ENCODE measurements at regions of chr10 and their contacts with region 1.

Region 1: GRCh38 chr10:88932539-88933256 is 19.9 kb downstream of the ACTA2 start:
- DNase-seq: peak in 3 of 5 donors; percentile 34 to 53 (median 35)
- H3K4me3 ChIP-seq: no peak overlapping the region
- H3K4me3 Mint-ChIP-seq: no peak overlapping the region
- H3K27ac ChIP-seq: no peak overlapping the region
- H3K27ac Mint-ChIP-seq: peak overlapping the region in 4 of 8 donors; percentile 7 to 93 (median 30)
- H3K4me1 ChIP-seq: peaks cover 11% of the 10 kb centered on the region
- H3K4me1 Mint-ChIP-seq: peaks cover 12 to 20% (median 18%) of the 10 kb centered on the region in 3 donors
- H3K27me3 ChIP-seq: no peaks in the 10 kb centered on the region
- H3K27me3 Mint-ChIP-seq: no peaks in the 10 kb centered on the region

Region 2: DNA sequence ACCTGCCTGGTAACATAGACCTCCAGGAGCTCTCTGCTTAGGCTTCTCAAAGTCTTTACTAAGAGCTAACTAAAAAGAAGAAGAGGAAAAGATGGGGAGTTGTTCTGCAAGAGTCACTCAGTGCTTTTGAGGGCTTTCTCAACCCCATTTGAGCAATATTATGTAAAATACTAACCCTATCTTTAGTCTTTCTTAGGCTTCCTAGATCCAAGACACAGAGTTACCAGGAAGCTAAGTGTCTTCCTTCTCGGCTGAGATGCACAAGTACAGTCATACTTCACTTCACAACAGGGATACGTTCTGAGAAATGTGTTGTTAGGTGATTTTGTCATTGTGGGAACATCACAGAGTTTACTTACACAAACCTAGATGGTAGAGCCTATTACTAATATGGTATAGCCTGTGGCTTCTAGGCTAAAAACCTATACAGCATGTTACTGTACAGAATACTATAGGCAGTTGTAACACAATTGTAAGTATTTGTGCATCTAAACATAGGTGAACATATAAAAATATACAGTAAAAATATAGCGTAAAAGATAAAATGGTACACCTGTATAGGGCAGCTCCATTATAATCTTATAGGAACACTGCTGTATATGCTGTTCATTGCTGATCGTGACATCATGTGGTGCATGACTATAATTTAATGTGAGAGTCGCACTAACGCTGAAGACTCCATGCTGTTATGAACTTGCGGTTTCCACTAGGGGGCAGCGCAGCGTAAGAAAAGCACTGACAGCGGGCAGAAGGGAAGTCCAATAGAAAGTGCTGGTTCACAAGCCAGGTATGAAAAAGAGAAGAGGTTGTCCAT is 97.4 kb before region 1 on chr10:
- CTCF ChIA-PET with region 1: interaction called, 150 read pairs
- POLR2A ChIA-PET with region 1: interaction called, 6 read pairs
- DNase-seq: peak; percentile 75 to 91 (median 75)
- H3K4me3 ChIP-seq: no peak overlapping the region
- H3K4me3 Mint-ChIP-seq: no peak overlapping the region
- H3K27ac ChIP-seq: no peak overlapping the region
- H3K27ac Mint-ChIP-seq: no peak overlapping the region
- H3K4me1 ChIP-seq: peaks cover 38% of the 10 kb centered on the region
- H3K4me1 Mint-ChIP-seq: peaks cover 32 to 36% (median 36%) of the 10 kb centered on the region in 3 donors
- H3K27me3 ChIP-seq: no peaks in the 10 kb centered on the region
- H3K27me3 Mint-ChIP-seq: no peaks in the 10 kb centered on the region

Region 3: GRCh38 chr10:89007129-89007893 is 74.6 kb after region 1 on chr10:
- CTCF ChIA-PET with region 1: interaction called, 16 read pairs
- POLR2A ChIA-PET with region 1: no interaction called
- DNase-seq: no peak
- H3K4me3 ChIP-seq: no peak overlapping the region
- H3K4me3 Mint-ChIP-seq: peak overlapping the region in 1 of 7 donors; percentile 32
- H3K27ac ChIP-seq: no peak overlapping the region
- H3K27ac Mint-ChIP-seq: peak overlapping the region in 6 of 8 donors; percentile 1 to 72 (median 58)
- H3K4me1 ChIP-seq: peaks cover 15% of the 10 kb centered on the region
- H3K4me1 Mint-ChIP-seq: peaks cover 26 to 57% (median 56%) of the 10 kb centered on the region in 3 donors
- H3K27me3 ChIP-seq: no peaks in the 10 kb centered on the region
- H3K27me3 Mint-ChIP-seq: no peaks in the 10 kb centered on the region

Region 4: DNA sequence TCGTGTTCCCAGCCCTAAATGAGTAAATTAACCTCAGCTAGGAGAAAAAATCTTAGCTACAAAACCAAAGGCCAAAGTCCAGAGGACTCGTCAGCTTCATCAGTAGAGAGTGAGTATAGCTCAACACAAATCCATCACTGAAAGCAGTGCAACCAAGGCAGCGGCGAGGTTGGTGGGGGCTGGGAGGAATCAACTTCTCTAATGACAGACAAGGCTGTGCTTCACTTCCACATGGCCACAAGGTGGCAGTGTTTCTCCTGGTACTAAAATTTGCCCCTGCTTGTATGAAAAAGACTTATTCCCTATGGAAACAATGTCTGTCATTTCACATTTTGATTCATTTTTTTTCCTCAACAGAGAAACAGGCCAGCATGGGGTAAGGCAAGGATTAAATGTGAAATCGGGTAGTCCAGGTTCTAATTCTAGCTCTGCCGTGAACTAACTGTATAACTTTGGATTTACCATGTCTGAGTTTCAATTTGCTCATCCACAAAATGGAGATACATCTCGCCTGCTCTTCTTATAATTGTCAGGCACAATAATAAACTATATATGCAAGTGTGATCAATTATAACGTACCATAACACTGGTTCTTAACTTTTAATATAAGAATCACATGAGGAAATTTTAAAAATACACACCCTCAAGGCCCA is 97.2 kb after region 1 on chr10:
- CTCF ChIA-PET with region 1: interaction called, 39 read pairs
- POLR2A ChIA-PET with region 1: no interaction called
- DNase-seq: peak; percentile 46 to 74 (median 53)
- H3K4me3 ChIP-seq: no peak overlapping the region
- H3K4me3 Mint-ChIP-seq: no peak overlapping the region
- H3K27ac ChIP-seq: no peak overlapping the region
- H3K27ac Mint-ChIP-seq: peak overlapping the region in 3 of 8 donors; percentile 5 to 73 (median 23)
- H3K4me1 ChIP-seq: no peaks in the 10 kb centered on the region
- H3K4me1 Mint-ChIP-seq: peaks cover 4 to 12% (median 10%) of the 10 kb centered on the region in 3 donors
- H3K27me3 ChIP-seq: no peaks in the 10 kb centered on the region
- H3K27me3 Mint-ChIP-seq: no peaks in the 10 kb centered on the region

Region 5: GRCh38 chr10:89217057-89217990 is 284.6 kb after region 1 on chr10:
- CTCF ChIA-PET with region 1: interaction called, 56 read pairs
- POLR2A ChIA-PET with region 1: no interaction called
- DNase-seq: peak; percentile 42 to 68 (median 47)
- H3K4me3 ChIP-seq: no peak overlapping the region
- H3K4me3 Mint-ChIP-seq: no peak overlapping the region
- H3K27ac ChIP-seq: no peak overlapping the region
- H3K27ac Mint-ChIP-seq: peak overlapping the region in 4 of 8 donors; percentile 6 to 82 (median 41)
- H3K4me1 ChIP-seq: peaks cover 6% of the 10 kb centered on the region
- H3K4me1 Mint-ChIP-seq: peaks cover 8 to 17% (median 14%) of the 10 kb centered on the region in 3 donors
- H3K27me3 ChIP-seq: no peaks in the 10 kb centered on the region
- H3K27me3 Mint-ChIP-seq: peaks cover 0 to 2% of the 10 kb centered on the region in 2 donors